ENCODE measurements at regions of chr5 and their contacts with region 1.

Region 1: DNA sequence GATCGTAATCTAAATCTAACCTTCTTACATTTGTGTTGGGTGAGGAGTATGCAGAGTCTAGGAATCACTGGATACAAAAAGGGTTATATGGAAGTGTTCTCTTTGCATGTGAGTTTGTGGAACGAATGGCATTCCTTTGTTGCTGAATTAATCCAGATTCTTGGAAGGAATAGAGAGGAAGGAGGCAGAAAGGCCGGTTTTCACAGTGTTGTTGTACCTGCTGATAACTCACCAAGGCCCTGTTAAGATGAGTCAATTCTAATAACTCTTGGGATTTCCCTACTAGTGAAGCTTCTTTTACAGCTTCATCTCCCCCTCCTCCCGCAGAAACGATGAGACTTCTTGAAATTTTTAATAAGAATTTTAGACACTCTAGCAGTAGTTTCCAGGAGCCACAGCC is 84.0 kb downstream of the ZSWIM6 start:
- DNase-seq: no peak
- ATAC-seq: peak in 2 of 4 donors; percentile 27 to 64
- H3K4me3 ChIP-seq: no peak overlapping the region
- H3K27ac ChIP-seq: no peak overlapping the region
- H3K4me1 ChIP-seq: peaks cover 3 to 10% (median 10%) of the 10 kb centered on the region in 3 donors
- H3K27me3 ChIP-seq: no peaks in the 10 kb centered on the region
- CTCF ChIP-seq: no peak

Region 2: DNA sequence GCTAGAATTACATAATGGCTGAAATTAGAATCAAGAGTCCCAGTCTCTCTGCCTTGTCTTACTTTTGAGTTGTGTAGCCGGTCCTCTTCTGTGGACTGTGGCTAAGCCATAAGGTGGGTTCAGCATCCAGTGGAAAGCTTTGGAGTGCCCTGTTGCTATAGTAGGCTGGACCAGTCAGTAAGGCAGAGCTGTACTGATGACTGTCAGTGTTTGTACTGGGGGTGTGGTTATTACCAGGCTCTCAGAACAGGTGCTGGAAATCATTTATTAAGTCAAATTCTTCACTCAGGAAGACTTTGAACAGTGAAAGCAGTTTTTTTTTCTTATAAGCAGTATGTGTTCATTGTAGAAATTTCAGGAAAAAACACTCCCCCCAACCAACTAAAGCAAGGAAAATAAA is 45.4 kb after region 1 on chr5:
- intact Hi-C with region 1: no loop called
- DNase-seq: no peak
- ATAC-seq: peak; percentile 73 to 85 (median 82)
- H3K4me3 ChIP-seq: no peak overlapping the region
- H3K27ac ChIP-seq: no peak overlapping the region
- H3K4me1 ChIP-seq: peaks cover 9 to 28% (median 28%) of the 10 kb centered on the region in 3 donors
- H3K27me3 ChIP-seq: no peaks in the 10 kb centered on the region
- CTCF ChIP-seq: no peak

Region 3: DNA sequence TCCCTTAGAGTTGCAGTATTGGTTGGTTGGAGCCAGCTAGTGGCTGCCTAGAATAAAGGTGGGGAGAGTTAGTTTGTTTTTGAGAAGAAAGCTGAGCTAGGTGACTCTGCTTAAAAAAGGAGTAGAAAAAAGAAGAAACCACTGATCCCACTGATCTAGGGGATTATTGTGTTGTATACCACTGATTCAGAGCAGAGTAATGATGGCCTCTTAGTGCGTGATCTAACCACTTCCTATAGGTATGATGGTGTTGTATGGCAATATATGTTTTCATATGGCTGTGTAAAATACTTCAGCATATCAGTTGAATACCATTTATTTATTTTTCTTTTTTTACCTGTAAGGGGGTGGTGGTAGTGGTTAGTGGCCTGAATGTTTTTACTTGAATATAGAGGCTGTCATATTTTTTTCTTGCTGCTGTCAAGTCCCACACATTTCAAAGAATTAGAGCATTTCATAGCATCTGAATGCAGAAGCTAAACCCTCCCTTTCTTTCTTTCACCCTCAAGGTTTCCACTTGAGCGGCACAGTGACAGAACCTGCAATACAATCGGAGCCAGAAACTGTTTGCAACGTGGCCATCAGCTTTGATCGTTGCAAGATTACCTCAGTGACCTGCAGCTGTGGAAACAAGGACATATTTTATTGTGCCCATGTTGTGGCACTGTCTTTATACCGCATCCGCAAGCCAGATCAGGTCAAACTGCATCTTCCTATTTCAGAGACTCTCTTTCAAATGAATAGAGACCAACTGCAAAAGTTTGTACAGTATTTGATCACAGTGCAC is 56.4 kb after region 1 on chr5:
- intact Hi-C with region 1: loop called in 1 of 3 experiments (anchors 10 kb)
- DNase-seq: no peak
- ATAC-seq: peak in 2 of 4 donors; percentile 33 to 40
- H3K4me3 ChIP-seq: no peak overlapping the region
- H3K27ac ChIP-seq: no peak overlapping the region
- H3K4me1 ChIP-seq: peaks cover 6 to 13% (median 7%) of the 10 kb centered on the region in 3 donors
- H3K27me3 ChIP-seq: no peaks in the 10 kb centered on the region
- CTCF ChIP-seq: no peak

Measured in pancreas (tissue), 10 donors.